HEK293 (cell line): ENCODE measurements at regions of chr11 and their contacts with region 1.

Region 1: GRCh38 chr11:94973099-94973968 is at the starts of genes CWC15 and KDM4D:
- H3K4me3 ChIP-seq: peak within 1 kb of the TSS; percentile 76
- H3K27ac ChIP-seq: peak within 1 kb of the TSS; percentile 57
- H3K4me1 ChIP-seq: no peaks in the 10 kb centered on the region; the same call in 1 of the 2 replicates
- CTCF ChIP-seq: no peak

Region 2: DNA sequence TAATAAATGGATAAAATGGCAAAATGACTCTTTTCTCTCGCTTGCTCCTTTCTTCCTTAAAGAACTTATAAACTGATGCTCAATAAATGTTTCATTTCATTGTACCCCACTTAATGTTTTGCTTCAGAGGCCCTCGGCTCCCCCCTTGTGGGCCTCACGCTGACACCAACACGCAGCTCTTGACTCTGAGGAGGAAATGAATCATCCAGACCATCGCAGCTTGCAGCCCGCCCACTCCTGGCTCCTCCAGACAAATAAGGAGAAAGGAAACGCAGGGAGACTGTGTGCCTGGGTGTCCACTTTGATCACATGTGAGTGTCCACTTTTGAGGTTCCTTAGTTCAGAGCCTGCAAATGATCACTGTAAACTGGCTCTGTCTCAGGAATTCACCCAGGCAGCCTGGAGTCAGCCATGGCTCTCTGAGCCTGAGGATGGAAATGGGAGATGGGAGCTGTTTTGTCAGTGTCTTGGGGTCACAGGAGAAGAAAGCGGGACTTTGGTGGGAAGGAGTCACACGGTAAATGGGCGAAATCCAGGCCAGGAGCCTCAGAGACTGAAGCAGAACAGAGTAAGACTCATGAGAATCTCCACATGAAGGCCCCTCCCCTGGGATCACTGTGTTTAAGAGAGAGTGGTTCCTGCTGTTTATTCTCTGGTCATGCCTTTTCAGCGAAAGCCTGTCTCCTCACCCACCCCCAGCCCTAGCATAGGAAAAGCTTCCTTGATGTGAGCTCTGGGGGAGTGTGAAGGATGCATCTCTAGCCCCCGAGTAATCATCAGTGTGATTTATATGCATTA is 96.5 kb before region 1 on chr11:
- CTCF ChIA-PET with region 1: no interaction called
- POLR2A ChIA-PET with region 1: no interaction called
- H3K4me3 ChIP-seq: no peak overlapping the region
- H3K27ac ChIP-seq: no peak overlapping the region
- H3K4me1 ChIP-seq: no peaks in the 10 kb centered on the region
- CTCF ChIP-seq: no peak

Region 3: GRCh38 chr11:94958121-94958696 is 15.1 kb before region 1 on chr11:
- CTCF ChIA-PET with region 1: interaction called, 13 read pairs
- POLR2A ChIA-PET with region 1: interaction called, 11 read pairs
- H3K4me3 ChIP-seq: no peak overlapping the region
- H3K27ac ChIP-seq: no peak overlapping the region
- H3K4me1 ChIP-seq: no peaks in the 10 kb centered on the region
- CTCF ChIP-seq: no peak